A673 (cell line): ENCODE measurements at regions of chr9 and their contacts with region 1.

Region 1: DNA sequence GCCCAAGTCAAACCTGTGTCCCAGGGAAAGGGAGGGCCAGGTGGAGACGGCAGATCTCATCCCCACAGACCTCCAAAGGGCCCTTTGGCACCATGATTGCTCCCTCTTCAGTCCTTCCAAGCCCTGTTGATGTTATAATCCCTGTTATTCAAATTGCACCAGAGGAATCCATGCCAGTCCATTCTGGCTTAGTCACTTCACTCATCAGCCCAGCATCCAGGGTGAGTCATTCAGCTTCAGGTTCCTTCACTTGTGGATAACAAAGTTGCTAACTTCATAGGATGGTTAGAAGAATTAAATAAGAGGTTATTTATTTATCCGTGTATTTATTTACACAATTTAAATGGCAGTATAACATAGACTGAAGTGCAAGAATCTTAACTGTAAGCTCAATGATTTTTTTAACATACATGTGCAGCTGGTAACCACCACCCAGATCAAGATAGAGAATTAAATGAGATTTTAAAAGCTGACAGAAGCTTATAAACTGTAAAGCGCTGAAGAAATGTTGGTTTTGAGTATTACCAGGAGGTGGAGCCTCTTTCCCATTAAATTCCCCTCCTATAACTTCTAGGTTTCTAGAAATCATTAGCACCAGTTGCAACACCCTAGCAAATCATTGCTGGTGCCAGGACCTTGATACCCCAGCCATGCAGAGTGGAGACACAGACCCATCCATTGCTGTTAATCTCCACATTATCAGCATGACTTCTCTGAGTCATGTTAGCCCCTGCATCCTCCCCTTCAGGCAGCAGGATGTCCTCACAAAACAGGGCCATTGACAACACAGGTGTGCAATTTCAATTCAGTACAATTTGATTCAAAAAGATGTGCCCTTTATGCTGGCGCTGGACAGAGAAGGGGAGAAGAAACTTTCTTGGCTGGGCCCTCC is 77.4 kb downstream of the SEC61B start:
- DNase-seq: peak; percentile 73
- H3K4me3 ChIP-seq: no peak overlapping the region
- H3K27ac ChIP-seq: no peak overlapping the region
- H3K4me1 ChIP-seq: peaks cover 16% of the 10 kb centered on the region
- H3K27me3 ChIP-seq: no peaks in the 10 kb centered on the region
- CTCF ChIP-seq: peak; percentile 59

Region 2: DNA sequence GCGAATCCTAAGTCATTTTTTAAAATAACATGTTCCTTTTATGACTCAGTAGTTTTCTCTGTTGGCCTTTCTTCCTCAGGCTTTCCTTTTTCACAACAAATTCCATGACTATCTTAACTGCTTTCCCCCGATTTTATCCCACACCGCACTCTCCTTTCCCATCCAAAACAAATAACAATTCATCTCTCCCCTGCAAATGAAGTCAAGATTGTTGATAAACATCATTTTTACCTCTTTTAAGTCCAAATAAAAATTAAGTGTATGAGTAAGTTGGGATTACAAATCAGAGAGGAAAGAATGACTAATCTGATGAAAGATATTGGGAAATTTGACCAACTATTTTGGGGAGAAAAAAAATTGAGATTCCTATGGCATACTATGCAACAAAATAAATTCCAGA is 30.0 kb before region 1 on chr9:
- CTCF ChIA-PET with region 1: no interaction called
- POLR2A ChIA-PET with region 1: no interaction called
- intact Hi-C with region 1: no loop called
- DNase-seq: no peak
- H3K4me3 ChIP-seq: no peak overlapping the region
- H3K27ac ChIP-seq: no peak overlapping the region
- H3K4me1 ChIP-seq: peaks cover 14% of the 10 kb centered on the region
- H3K27me3 ChIP-seq: no peaks in the 10 kb centered on the region
- CTCF ChIP-seq: no peak

Region 3: DNA sequence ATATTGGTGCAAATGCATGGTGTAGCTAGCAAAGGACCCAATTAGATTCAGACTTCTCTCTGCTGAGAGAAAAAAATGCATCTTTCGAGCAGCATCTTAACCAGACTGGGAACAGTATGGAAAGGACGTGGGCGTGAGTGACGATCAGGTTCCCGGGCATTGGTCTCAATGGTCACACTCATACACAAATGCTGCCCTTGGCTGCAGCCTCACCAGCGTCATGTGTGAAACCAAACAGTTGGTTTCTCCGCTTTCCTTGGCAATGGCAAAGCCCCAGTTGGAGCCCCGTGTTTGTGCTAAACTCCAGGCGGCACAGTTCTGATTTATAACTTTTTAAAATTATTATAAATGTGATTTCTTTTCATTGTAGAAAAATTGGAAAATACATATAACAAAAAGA is 160.5 kb after region 1 on chr9:
- CTCF ChIA-PET with region 1: no interaction called
- POLR2A ChIA-PET with region 1: no interaction called
- intact Hi-C with region 1: loop called (anchors 5 kb)
- DNase-seq: no peak
- H3K4me3 ChIP-seq: no peak overlapping the region
- H3K27ac ChIP-seq: peak overlapping the region; percentile 94
- H3K4me1 ChIP-seq: peaks cover 30% of the 10 kb centered on the region
- H3K27me3 ChIP-seq: no peaks in the 10 kb centered on the region
- CTCF ChIP-seq: no peak